Activated CD4-positive, alpha-beta memory T cell treated with anti-CD3 and anti-CD28 coated beads for 36 hours (primary cell): ENCODE measurements at regions of chr1 and their contacts with region 1.

Region 1: GRCh38 chr1:59699227-59699847 is 115.4 kb upstream of the HOOK1 start:
- DNase-seq: peak; percentile 13
- H3K4me3 Mint-ChIP-seq: no peak overlapping the region
- H3K27ac Mint-ChIP-seq: no peak overlapping the region
- H3K4me1 Mint-ChIP-seq: peaks cover 17% of the 10 kb centered on the region
- H3K27me3 Mint-ChIP-seq: no peaks in the 10 kb centered on the region

Region 2: GRCh38 chr1:58652651-58653184 is 1046.6 kb before region 1 on chr1:
- CTCF ChIA-PET with region 1: no interaction called
- POLR2A ChIA-PET with region 1: no interaction called
- intact Hi-C with region 1: loop called (anchors 1 kb)
- DNase-seq: peak; percentile 58
- H3K4me3 Mint-ChIP-seq: no peak overlapping the region
- H3K27ac Mint-ChIP-seq: no peak overlapping the region
- H3K4me1 Mint-ChIP-seq: peaks cover 11% of the 10 kb centered on the region
- H3K27me3 Mint-ChIP-seq: no peaks in the 10 kb centered on the region

Region 3: GRCh38 chr1:59046730-59047157 is 652.6 kb before region 1 on chr1:
- CTCF ChIA-PET with region 1: no interaction called
- POLR2A ChIA-PET with region 1: no interaction called
- intact Hi-C with region 1: loop called (anchors 10 kb)
- DNase-seq: peak; percentile 64
- H3K4me3 Mint-ChIP-seq: no peak overlapping the region
- H3K27ac Mint-ChIP-seq: peak overlapping the region; percentile 64
- H3K4me1 Mint-ChIP-seq: peaks cover 33% of the 10 kb centered on the region
- H3K27me3 Mint-ChIP-seq: no peaks in the 10 kb centered on the region

Region 4: GRCh38 chr1:59296358-59297256 is 402.7 kb before region 1 on chr1 and contains the start of gene FGGY:
- CTCF ChIA-PET with region 1: no interaction called
- POLR2A ChIA-PET with region 1: no interaction called
- intact Hi-C with region 1: loop called (anchors 2 kb)
- DNase-seq: peak; percentile 90
- H3K4me3 Mint-ChIP-seq: peak within 1 kb of the TSS; percentile 79
- H3K27ac Mint-ChIP-seq: peak within 1 kb of the TSS; percentile 70
- H3K4me1 Mint-ChIP-seq: peaks cover 13% of the 10 kb centered on the region
- H3K27me3 Mint-ChIP-seq: no peaks in the 10 kb centered on the region
- total RNA-seq, gene FGGY: 10.2 TPM

Region 5: DNA sequence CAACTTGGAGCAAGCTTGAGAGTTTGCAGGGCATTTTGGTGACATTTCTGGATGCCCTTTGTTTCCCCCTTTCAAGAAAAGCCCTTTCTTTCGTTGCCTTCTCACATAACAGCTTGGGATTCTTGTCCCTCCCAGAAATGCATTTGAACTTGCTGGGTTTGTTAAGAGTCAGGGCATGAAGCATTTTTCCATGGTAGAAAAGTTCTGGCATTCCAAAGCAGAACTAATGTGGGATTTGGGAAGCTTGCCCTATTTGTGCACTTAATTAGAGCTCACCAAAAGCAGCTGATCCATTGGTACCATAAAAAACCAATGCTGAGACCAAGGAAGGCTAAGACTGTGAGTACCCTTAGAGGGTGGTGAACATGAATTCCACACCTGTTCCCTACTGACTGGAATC is 15.6 kb after region 1 on chr1:
- CTCF ChIA-PET with region 1: interaction called, 12 read pairs
- POLR2A ChIA-PET with region 1: no interaction called
- intact Hi-C with region 1: no loop called
- DNase-seq: no peak
- H3K4me3 Mint-ChIP-seq: no peak overlapping the region
- H3K27ac Mint-ChIP-seq: no peak overlapping the region
- H3K4me1 Mint-ChIP-seq: no peaks in the 10 kb centered on the region
- H3K27me3 Mint-ChIP-seq: no peaks in the 10 kb centered on the region